Natural killer cell (primary cell): ENCODE measurements at regions of chr1 and their contacts with region 1.

Region 1: DNA sequence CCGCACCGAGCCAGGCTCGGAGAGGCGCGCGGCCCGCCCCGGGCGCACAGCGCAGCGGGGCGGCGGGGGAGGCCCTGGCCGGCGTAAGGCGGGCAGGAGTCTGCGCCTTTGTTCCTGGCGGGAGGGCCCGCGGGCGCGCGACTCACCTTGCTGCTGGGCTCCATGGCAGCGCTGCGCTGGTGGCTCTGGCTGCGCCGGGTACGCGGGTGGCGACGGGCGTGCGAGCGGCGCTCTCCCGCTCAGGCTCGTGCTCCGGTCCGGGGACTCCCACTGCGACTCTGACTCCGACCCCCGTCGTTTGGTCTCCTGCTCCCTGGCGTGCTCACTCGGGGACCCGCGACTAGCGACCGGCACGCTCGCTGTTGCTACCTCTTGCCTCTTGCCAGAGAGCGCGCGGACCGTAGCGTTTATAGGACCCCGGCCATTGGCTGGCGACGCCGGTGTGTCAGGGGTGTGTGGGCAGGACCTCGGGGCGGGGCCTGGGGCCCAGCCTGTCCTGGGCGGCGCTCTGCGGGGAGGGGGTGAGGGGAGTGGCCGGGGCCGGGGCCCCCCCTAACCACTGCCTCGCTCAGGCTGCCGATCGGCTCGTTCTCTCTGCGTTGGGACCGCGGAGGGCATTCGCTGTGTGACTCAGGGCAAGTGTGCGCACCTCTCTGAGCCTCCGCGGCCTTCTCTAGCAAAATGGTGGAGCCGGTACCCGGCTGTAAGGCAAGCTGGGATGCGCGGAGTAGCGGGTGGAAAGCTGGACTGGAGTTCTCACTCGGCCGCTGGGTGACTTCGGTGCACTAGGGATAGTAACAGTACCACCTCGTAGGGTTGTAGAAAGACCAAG is at the start of gene SLC2A1:
- DNase-seq: peak; percentile 90 to 97
- ATAC-seq: peak; percentile 86 to 97 (median 89)
- H3K4me3 ChIP-seq: peak within 1 kb of the TSS; percentile 85
- H3K4me3 Mint-ChIP-seq: peak within 1 kb of the TSS; percentile 93
- H3K27ac ChIP-seq: peak within 1 kb of the TSS; percentile 75
- H3K27ac Mint-ChIP-seq: peak within 1 kb of the TSS; percentile 88 to 96
- H3K4me1 ChIP-seq: peaks cover 57% of the 10 kb centered on the region
- H3K4me1 Mint-ChIP-seq: peaks cover 48 to 70% of the 10 kb centered on the region in 2 donors
- H3K27me3 ChIP-seq: no peaks in the 10 kb centered on the region
- H3K27me3 Mint-ChIP-seq: peaks cover 0 to 8% of the 10 kb centered on the region in 2 donors
- CTCF ChIP-seq: no peak
- total RNA-seq, gene SLC2A1: 94.7 to 143 (median 95.1) TPM

Region 2: DNA sequence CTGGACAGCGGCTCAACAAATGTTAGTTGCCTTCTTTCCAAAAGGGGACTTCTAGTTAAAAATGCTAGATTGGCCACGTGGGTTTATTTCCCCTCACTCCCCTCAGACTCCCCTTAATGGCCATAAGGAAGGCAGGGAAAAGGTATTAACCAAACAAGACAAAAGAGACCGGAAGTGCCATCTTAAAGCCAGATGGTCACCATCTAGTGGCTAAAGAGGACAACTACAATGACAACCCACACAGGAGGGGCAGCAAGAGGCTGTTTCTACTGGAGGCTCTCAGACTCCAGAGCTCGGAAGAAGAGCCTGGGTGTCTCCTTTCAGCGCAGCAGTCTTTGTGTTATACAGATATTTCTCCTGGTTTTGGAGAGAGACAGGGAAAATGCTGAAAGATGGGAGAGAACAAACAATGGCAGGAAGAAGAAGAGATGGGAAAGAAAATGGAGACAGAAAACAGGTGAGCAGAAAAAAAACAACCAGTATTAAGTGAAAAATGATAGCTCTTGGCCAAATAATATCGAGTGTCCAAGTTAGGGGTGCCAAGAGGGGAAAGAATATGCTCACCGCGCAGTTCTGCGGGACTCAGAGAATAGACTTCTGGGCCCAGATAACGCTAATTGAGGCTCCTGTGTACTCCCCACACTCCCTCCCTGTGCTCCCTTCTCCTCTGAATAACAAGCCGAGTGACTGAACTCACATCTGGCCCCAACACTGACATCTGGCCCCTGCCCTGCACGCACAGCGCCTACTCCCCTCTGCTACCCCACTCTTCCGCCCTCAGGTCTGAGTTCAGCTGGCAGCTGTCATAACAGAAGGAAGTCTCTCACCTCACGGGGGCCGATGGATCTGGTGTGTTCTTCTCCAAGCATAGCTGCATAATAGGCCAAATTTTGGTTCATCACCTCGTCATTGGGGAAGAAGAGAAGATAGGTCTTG is 201.5 kb before region 1 on chr1:
- intact Hi-C with region 1: no loop called
- DNase-seq: peak in 1 of 2 donors; percentile 57
- ATAC-seq: peak; percentile 67 to 92 (median 77)
- H3K4me3 ChIP-seq: no peak overlapping the region
- H3K4me3 Mint-ChIP-seq: no peak overlapping the region
- H3K27ac ChIP-seq: no peak overlapping the region
- H3K27ac Mint-ChIP-seq: peak overlapping the region; percentile 19 to 72
- H3K4me1 ChIP-seq: no peaks in the 10 kb centered on the region
- H3K4me1 Mint-ChIP-seq: peaks cover 5 to 13% of the 10 kb centered on the region in 2 donors
- H3K27me3 ChIP-seq: no peaks in the 10 kb centered on the region
- H3K27me3 Mint-ChIP-seq: no peaks in the 10 kb centered on the region
- CTCF ChIP-seq: peak; percentile 57

Region 3: DNA sequence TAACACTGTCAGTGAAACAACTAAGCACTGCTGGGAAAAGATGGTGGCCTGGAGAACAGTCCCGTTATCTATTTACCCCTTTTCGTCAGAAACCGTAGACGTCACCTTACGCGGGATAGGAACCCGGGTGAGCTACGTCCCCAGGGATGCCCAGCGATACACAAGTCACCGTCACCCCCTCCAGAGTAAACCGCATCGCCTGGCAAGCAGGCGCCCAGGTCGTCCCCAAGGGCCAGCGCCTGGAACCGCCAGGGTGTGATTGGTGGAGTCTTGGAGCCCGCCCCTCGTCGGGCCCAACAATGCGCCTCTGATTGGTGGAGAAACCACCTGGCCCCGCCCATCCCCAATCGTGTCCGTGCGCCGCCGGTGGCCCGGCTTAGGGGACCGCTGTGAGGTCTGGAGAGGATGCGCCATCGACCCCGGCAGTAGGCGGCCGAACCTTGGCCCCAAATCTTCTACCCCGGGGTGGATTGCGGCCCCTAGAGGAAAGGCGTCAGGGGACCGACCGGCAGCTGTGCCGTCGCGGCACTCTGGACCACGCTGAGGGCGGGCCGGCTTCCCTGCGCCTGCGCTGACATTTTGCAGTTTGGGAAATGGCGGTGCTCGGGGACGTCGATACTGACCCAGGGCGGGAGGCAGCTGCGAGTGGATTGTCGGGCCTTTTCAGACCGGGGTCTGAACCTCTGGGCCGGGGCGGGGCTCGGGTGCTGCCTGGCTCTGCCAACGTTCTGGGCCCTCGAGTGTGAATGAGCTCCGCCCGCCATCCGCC is 34.4 kb before region 1 on chr1:
- intact Hi-C with region 1: loop called (anchors 5 kb)
- DNase-seq: peak; percentile 94 to 95
- ATAC-seq: peak; percentile 90 to 96 (median 92)
- H3K4me3 ChIP-seq: peak overlapping the region; percentile 90
- H3K4me3 Mint-ChIP-seq: peak overlapping the region; percentile 91
- H3K27ac ChIP-seq: peak overlapping the region; percentile 90
- H3K27ac Mint-ChIP-seq: peak overlapping the region; percentile 82 to 83
- H3K4me1 ChIP-seq: peaks cover 26% of the 10 kb centered on the region
- H3K4me1 Mint-ChIP-seq: peaks cover 48 to 49% of the 10 kb centered on the region in 2 donors
- H3K27me3 ChIP-seq: no peaks in the 10 kb centered on the region
- H3K27me3 Mint-ChIP-seq: no peaks in the 10 kb centered on the region
- CTCF ChIP-seq: no peak

Region 4: DNA sequence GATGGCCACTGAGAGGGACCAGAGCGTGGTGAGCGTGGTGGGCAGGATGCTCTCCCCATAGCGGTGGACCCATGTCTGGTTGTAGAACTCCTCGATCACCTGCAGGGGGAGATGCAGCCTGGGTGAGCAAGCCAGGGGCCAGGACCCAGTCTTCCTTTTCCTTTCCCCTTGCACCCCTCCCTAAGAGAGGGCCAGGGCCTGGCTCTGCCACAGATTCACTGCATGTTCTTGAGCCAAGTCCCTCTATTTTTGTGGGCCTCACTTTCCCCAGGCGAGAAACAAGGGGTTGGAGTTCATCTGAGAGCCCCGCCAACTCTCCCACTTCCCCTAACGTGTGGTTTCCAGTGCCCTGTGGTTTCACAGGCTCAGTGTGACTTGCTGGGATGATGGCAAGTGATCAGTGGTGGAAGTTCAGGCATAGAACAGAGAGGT is 27.6 kb before region 1 on chr1:
- intact Hi-C with region 1: loop called (anchors 1 kb)
- DNase-seq: peak; percentile 64 to 85
- ATAC-seq: peak; percentile 39 to 58 (median 40)
- H3K4me3 ChIP-seq: no peak overlapping the region
- H3K4me3 Mint-ChIP-seq: peak overlapping the region; percentile 88
- H3K27ac ChIP-seq: peak overlapping the region; percentile 92
- H3K27ac Mint-ChIP-seq: peak overlapping the region; percentile 96 to 98
- H3K4me1 ChIP-seq: peaks cover 77% of the 10 kb centered on the region
- H3K4me1 Mint-ChIP-seq: peaks cover 78 to 86% of the 10 kb centered on the region in 2 donors
- H3K27me3 ChIP-seq: no peaks in the 10 kb centered on the region
- H3K27me3 Mint-ChIP-seq: no peaks in the 10 kb centered on the region
- CTCF ChIP-seq: peak; percentile 69

Region 5: GRCh38 chr1:42936309-42937078 is 22.2 kb before region 1 on chr1:
- intact Hi-C with region 1: loop called (anchors 1 kb)
- DNase-seq: peak; percentile 59 to 71
- ATAC-seq: peak; percentile 29 to 59 (median 46)
- H3K4me3 ChIP-seq: no peak overlapping the region
- H3K4me3 Mint-ChIP-seq: peak overlapping the region; percentile 84
- H3K27ac ChIP-seq: peak overlapping the region; percentile 92
- H3K27ac Mint-ChIP-seq: peak overlapping the region; percentile 96 to 98
- H3K4me1 ChIP-seq: peaks cover 97% of the 10 kb centered on the region
- H3K4me1 Mint-ChIP-seq: peaks cover 89 to 98% of the 10 kb centered on the region in 2 donors
- H3K27me3 ChIP-seq: no peaks in the 10 kb centered on the region
- H3K27me3 Mint-ChIP-seq: no peaks in the 10 kb centered on the region
- CTCF ChIP-seq: no peak

Region 6: GRCh38 chr1:43188106-43188505 is 229.4 kb after region 1 on chr1:
- intact Hi-C with region 1: no loop called
- DNase-seq: no peak
- ATAC-seq: no peak
- H3K4me3 ChIP-seq: no peak overlapping the region
- H3K4me3 Mint-ChIP-seq: no peak overlapping the region
- H3K27ac ChIP-seq: no peak overlapping the region
- H3K27ac Mint-ChIP-seq: no peak overlapping the region
- H3K4me1 ChIP-seq: no peaks in the 10 kb centered on the region
- H3K4me1 Mint-ChIP-seq: no peaks in the 10 kb centered on the region
- H3K27me3 ChIP-seq: no peaks in the 10 kb centered on the region
- H3K27me3 Mint-ChIP-seq: peaks cover 20 to 36% of the 10 kb centered on the region in 2 donors
- CTCF ChIP-seq: no peak